Endothelial cell of umbilical vein (primary cell): ENCODE measurements at regions of chr11 and their contacts with region 1.

Region 1: DNA sequence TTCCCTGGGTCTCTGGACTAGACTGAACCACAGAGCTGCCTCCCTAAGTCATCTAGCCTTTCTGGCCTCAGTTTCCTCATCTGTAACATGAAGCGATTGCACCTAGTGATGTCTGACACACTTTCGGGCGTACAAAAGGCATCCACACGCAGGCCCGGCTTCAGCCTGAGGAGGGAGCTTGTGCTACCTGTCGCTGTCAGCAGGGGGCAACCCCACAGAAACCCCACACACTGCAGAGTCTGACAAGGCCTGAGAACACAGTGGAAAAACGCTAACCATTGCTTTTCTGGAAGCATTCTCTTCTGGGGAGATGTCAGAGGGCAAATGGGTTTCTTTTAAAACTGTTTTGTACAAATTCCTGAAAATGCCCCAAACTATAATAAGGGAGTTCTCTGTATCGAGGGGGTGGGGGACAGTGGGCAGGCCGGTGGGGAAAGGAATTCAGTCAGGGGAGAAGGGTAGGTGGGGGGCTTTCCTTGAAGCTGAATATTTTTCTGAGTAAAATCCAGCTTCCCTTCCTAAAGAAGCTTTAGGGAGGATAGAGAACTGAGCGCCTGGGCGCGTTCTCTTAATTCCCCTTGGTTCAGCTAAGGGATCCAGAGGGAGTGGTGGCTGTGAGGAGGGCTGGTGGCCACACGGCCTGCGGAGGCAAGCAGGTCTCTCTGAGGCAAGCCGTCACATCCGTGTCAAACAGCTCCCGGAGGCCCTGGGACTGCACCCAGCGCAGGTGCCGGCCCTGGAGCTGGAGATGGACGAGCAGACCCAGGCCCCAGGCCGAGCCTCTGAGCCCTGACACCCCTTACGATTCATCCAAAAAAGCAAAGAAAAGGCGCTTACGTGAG is 533 bp downstream of the ELF5 start:
- DNase-seq: peak; percentile 49
- H3K4me3 ChIP-seq: no peak overlapping the region
- H3K27ac ChIP-seq: no peak overlapping the region
- H3K4me1 ChIP-seq: no peaks in the 10 kb centered on the region
- H3K27me3 ChIP-seq: no peaks in the 10 kb centered on the region
- CTCF ChIP-seq: peak; percentile 86 to 92
- POLR2A ChIP-seq: no peak

Region 2: DNA sequence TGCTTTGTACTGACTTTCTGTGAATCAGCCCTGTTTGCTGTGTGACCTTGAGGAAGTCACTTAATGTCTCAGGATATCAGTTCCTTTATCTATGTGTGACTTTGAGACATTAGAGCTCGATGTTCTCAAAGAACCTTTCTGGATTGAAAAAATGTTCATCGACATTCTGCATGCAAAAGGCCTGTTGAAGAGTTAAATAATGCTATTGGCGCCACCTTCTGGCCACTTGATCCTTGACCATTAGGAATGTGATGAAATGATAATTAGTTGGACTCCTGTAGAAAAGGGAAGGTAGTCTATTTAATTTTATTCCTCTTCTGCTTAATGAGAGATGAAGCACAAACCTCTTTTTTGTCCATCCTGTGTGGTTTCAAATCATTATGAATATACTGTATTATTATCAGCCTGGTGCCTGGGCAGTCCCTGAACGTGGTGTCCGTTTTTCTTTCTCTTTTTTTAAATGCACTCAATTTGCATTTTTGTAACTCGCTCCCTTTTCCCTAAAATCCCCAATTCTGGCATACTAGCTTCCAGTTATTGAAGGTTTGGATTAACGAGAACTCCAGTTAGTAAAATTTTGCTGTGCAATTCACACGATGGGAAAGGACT is 20.2 kb before region 1 on chr11:
- CTCF ChIA-PET with region 1: interaction called, 15 read pairs
- POLR2A ChIA-PET with region 1: no interaction called
- dilution Hi-C with region 1: no loop called
- intact Hi-C with region 1: no loop called
- DNase-seq: peak; percentile 64
- H3K4me3 ChIP-seq: no peak overlapping the region
- H3K27ac ChIP-seq: no peak overlapping the region
- H3K4me1 ChIP-seq: no peaks in the 10 kb centered on the region
- H3K27me3 ChIP-seq: peaks cover 6% of the 10 kb centered on the region in 2 experiments
- CTCF ChIP-seq: peak; percentile 42 to 50
- POLR2A ChIP-seq: no peak

Region 3: GRCh38 chr11:34501500-34501899 is 11.6 kb before region 1 on chr11:
- CTCF ChIA-PET with region 1: interaction called, 20 read pairs
- POLR2A ChIA-PET with region 1: no interaction called
- dilution Hi-C with region 1: no loop called
- intact Hi-C with region 1: no loop called
- DNase-seq: no peak
- H3K4me3 ChIP-seq: no peak overlapping the region
- H3K27ac ChIP-seq: no peak overlapping the region
- H3K4me1 ChIP-seq: no peaks in the 10 kb centered on the region
- H3K27me3 ChIP-seq: peaks cover 0 to 2% of the 10 kb centered on the region in 2 experiments
- CTCF ChIP-seq: no peak
- POLR2A ChIP-seq: no peak

Region 4: GRCh38 chr11:34523068-34523467 is 10.0 kb after region 1 on chr11:
- CTCF ChIA-PET with region 1: interaction called, 10 read pairs
- POLR2A ChIA-PET with region 1: no interaction called
- dilution Hi-C with region 1: no loop called
- intact Hi-C with region 1: no loop called
- DNase-seq: no peak
- H3K4me3 ChIP-seq: no peak overlapping the region
- H3K27ac ChIP-seq: no peak overlapping the region
- H3K4me1 ChIP-seq: no peaks in the 10 kb centered on the region
- H3K27me3 ChIP-seq: peaks cover 0 to 2% of the 10 kb centered on the region in 2 experiments
- CTCF ChIP-seq: no peak
- POLR2A ChIP-seq: no peak

Region 5: DNA sequence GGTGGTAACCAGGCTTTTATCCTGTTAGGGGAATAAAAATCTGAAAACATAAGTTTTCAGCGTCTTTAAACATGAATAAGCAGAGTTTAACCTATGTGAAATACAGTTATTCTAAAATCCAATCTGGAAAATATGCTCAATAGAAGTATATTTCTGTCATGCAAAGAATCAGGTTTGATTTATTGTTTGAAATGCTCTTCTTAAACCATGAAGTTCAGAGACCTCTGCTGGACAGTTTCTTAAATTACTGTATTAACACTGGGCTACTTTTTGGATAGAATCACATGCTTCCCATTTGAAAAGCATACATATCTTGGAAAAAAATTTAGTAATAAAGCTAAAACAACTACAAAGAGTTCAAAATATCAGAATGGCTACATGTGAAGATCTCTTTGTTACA is 377.8 kb after region 1 on chr11:
- CTCF ChIA-PET with region 1: interaction called, 32 read pairs
- POLR2A ChIA-PET with region 1: no interaction called
- dilution Hi-C with region 1: no loop called
- intact Hi-C with region 1: loop called (anchors 1 kb)
- DNase-seq: peak; percentile 58
- H3K4me3 ChIP-seq: no peak overlapping the region
- H3K27ac ChIP-seq: no peak overlapping the region
- H3K4me1 ChIP-seq: no peaks in the 10 kb centered on the region
- H3K27me3 ChIP-seq: no peaks in the 10 kb centered on the region
- CTCF ChIP-seq: peak in 1 of 2 donors; percentile 12
- POLR2A ChIP-seq: no peak

Region 6: DNA sequence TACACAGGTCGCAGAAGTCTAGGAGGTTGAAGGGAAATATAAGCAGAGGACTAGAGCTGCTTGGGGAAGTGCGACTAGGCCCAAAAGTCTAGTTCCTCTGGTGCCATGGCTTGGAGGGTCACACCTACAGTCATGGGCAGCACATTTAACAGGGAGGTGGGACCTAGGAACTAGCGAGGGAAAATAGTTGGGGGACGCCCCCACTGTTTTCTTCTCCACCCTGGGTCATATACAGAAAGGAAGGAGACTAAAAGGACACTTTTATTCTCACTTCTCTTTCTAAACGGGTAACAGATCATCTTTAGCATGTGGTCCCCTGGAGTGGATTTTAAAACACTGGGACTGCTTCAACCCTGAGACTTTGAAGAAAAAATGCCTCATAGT is 386.6 kb after region 1 on chr11:
- CTCF ChIA-PET with region 1: interaction called, 16 read pairs
- POLR2A ChIA-PET with region 1: no interaction called
- dilution Hi-C with region 1: no loop called
- intact Hi-C with region 1: no loop called
- DNase-seq: no peak
- H3K4me3 ChIP-seq: no peak overlapping the region
- H3K27ac ChIP-seq: no peak overlapping the region
- H3K4me1 ChIP-seq: no peaks in the 10 kb centered on the region
- H3K27me3 ChIP-seq: no peaks in the 10 kb centered on the region
- CTCF ChIP-seq: no peak
- POLR2A ChIP-seq: no peak

Region 7: GRCh38 chr11:35391922-35392813 is 879.1 kb after region 1 on chr11:
- CTCF ChIA-PET with region 1: interaction called, 31 read pairs
- POLR2A ChIA-PET with region 1: no interaction called
- dilution Hi-C with region 1: no loop called
- intact Hi-C with region 1: loop called (anchors 1 kb)
- DNase-seq: peak; percentile 62
- H3K4me3 ChIP-seq: no peak overlapping the region
- H3K27ac ChIP-seq: no peak overlapping the region
- H3K4me1 ChIP-seq: no peaks in the 10 kb centered on the region
- H3K27me3 ChIP-seq: peaks cover 10 to 14% of the 10 kb centered on the region in 2 experiments
- CTCF ChIP-seq: peak; percentile 80 to 81
- POLR2A ChIP-seq: no peak